Dorsolateral prefrontal cortex (tissue), 120 donors: ENCODE measurements at regions of chr1 and their contacts with region 1.

Region 1: GRCh38 chr1:29341936-29342335 is 105.6 kb downstream of the PTPRU start:
- DNase-seq: no peak
- H3K4me3 ChIP-seq: no peak overlapping the region
- H3K27ac ChIP-seq: peak overlapping the region in 6 of 59 donors; percentile 1 to 47 (median 18)
- H3K27me3 ChIP-seq: peaks cover 0 to 9% (median 0%) of the 10 kb centered on the region in 45 donors
- CTCF ChIP-seq: peak in 4 of 56 donors; percentile 1 to 20 (median 11)

Region 2: DNA sequence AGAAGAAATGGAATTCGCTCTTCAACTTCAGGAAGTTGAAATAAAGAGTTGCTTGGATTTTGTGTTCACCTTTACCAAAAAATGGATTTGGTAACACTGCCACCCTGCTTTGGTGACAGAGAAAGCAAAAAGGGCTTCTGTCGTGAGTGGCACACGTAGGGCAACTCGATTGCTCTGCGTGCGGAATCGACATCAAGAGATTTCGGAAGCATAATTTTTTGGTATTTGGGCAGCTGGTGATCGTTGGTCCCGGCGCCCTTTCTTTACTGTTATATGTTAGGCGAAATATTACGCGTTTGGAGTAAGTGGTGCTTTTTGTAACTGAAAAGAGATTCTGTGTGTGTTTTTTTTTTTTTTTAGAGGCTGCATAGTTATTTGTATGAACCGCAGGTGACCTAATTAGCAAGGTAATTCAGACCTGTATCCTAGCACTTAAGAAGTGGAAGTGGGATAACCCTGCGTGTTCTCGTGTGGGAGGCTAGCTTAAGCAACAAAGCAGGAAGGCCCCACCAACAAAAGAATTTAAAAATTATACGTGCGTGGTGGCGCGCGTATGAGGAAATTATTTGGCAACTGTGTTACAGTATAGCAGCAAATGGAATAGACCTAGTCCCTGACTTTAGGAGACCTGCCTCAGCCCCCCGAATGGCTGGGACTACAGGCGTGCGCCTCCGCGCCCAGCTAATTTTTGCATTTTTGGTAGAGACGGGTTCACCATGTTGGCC is 693.3 kb before region 1 on chr1 and contains the start of gene RNU11:
- intact Hi-C with region 1: no loop called
- DNase-seq: peak; percentile 57 to 91 (median 86)
- H3K4me3 ChIP-seq: peak within 1 kb of the TSS; percentile 20 to 70 (median 57)
- H3K27ac ChIP-seq: peak within 1 kb of the TSS; percentile 54 to 100 (median 97)
- H3K27me3 ChIP-seq: no peaks in the 10 kb centered on the region
- CTCF ChIP-seq: peak in 16 of 56 donors; percentile 2 to 32 (median 12)
- total RNA-seq, gene RNU11: not detected

Region 3: DNA sequence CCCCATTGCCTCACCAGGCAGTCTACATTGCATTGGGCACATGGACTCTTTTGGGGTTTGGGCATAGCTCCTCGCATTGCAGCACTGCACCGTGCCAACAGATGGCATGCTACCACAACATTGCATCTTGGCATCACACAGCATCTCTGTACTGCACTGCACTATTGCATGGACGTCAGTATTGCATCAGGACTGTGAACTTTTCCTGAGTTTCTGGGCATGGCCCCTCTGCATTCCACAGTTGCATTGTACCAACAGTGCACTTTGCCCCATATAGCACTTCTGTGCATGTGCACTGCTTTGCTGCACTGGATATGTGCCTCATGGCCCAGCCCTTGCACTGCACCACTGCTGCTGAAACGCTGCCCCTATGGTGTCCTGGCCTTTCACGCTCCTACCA is 96.1 kb before region 1 on chr1:
- intact Hi-C with region 1: loop called (anchors 5 to 10 kb)
- DNase-seq: peak in 8 of 10 donors; percentile 31 to 74 (median 60)
- H3K4me3 ChIP-seq: no peak overlapping the region
- H3K27ac ChIP-seq: no peak overlapping the region
- H3K27me3 ChIP-seq: no peaks in the 10 kb centered on the region
- CTCF ChIP-seq: peak in 53 of 56 donors; percentile 24 to 73 (median 53)